Posterior cingulate gyrus (tissue), 11 donors: ENCODE measurements at regions of chr22 and their contacts with region 1.

Region 1: GRCh38 chr22:19717691-19718455 is 3.6 kb downstream of the SEPTIN5 start:
- DNase-seq: peak; percentile 61 to 96 (median 74)

Region 2: DNA sequence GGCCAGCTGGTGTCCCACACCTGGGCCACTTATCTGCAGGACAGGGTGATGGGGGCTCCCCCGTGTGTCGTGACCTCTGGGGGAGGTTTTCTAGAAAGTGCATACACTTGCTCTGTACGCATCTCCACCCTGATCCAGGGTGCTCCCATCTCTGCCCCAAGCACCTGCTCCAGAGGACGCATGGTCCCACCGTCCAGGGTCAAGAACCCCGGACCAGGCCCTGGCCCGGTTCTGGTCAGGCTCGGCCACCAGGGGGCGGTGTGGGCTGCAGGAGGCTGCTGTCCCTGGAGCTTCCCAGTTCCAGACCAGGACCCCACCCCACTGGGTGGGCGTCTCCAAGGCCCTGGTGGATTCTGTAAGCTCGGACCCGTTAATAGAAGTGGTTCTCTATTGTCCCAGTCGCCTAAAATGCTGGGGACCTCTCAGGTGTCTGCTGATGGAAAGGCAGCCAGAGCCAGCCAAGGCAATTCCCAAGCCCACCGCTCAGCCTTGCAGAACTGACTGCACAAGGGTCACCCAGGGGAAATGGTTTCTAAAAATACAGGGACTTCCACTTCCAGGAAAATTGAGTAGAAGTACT is 38.3 kb before region 1 on chr22:
- intact Hi-C with region 1: loop called (anchors 5 kb)
- DNase-seq: peak in 6 of 10 donors; percentile 28 to 83 (median 45)

Region 3: DNA sequence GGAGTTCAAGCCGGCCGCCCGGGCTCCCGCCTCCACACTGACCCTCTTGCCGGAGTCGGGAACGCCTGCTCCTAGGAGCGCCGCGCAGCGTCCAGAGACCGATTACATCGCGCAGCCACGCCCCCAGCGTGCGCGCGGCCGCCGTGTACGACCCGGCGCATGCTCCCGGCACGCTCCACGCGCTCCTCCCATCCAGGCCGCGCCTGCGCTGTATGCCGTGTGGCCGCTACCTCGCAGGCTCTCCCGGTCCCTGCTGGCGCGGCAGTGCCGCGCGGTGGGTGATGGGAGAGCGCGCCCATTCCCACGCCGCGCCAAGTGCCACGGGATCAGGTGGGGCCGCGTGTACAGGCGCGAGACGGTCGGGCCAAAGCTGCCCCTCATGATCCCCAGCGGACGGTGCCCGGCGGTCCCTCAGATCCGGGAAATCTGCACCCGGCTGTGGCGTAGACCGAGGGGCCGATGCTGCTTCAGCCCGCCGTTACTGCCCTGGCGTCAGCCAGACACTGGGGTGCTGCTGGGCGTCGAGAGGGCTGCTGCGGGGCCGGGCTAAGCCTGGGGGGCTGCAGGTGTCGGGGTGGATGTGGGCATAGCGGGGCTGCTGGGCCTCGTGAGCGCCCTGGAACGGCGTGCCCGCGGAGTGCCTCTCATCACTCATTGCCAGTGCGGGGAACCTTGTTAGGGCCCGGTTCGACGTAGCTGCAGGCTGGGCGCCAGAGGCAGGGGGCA is 137.1 kb after region 1 on chr22 and contains the starts of genes GNB1L and RTL10:
- intact Hi-C with region 1: no loop called
- DNase-seq: peak; percentile 89 to 99 (median 94)